Cardiac septum (tissue), 1 donor: ENCODE measurements at regions of chr17 and their contacts with region 1.

Region 1: GRCh38 chr17:9414471-9414870 is 161.1 kb downstream of the STX8 start:
- DNase-seq: no peak

Region 2: DNA sequence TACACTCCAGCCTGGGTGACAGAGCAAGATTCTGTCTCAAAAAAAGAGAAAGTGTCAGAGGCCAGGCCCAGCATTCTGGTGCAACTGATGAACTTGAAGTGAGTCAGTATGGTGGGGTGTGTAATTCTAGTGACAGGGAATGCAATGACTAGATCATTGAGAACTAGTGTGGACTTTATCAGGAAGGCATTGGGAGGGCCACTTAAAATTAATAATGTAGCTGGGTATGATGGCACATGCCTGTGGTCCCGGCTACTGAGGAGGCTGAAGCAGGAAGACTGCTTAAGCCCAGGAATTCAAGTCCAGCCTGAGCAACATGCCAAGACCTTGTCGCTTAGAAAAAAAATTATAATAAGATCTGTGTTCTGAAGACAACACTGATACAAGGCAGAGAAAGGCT is 70.3 kb after region 1 on chr17:
- intact Hi-C with region 1: loop called (anchors 10 kb)
- DNase-seq: no peak

Region 3: DNA sequence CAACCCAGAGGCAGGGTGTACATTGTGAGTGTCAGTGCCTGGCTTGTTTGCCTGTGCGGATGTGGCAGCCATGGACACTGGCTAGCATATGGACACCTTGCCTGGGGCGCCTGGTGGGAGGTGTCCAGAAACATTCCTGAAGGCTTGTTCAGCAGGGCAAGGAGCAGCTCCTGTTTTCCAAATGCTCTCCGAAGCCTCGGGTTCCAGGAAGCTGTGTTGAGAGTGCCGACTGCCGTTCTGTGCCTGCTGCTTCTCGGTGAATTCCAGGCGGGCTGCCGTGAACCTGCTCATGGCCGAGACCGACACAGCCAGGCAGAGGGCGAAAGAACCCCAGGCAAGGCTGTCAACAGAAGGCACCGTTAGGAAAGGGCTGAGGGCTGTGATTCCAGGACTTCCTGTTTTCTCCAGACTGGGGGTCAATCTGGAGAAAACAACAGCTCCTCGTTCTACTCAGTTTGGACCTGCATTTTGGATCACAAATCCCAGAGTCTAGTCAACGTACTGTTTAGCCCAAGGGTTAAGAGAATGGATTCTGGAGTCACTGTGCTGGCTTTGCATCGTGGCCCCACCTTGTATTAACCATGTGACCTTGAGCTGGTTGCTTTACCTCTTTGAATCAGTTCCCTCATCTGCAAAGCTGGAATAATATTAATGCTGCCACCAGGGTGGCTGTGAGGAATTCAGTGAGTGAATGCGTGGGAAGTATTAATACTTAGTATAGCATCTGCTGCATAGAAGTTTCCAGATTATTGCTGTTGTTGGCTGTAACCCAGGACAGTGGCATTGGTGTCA is 388.0 kb after region 1 on chr17:
- intact Hi-C with region 1: no loop called
- DNase-seq: no peak